ENCODE measurements at regions of chr1 and their contacts with region 1.

Region 1: GRCh38 chr1:66331657-66332547 is 202.1 kb upstream of the SGIP1 start:
- DNase-seq: peak; percentile 41 to 71 (median 45)
- H3K4me3 ChIP-seq: peak overlapping the region; percentile 79 to 96
- H3K4me3 Mint-ChIP-seq: peak overlapping the region; percentile 99 to 100 (median 100)
- H3K27ac ChIP-seq: peak overlapping the region; percentile 85
- H3K27ac Mint-ChIP-seq: peak overlapping the region; percentile 97 to 100 (median 98)
- H3K4me1 ChIP-seq: peaks cover 53% of the 10 kb centered on the region
- H3K4me1 Mint-ChIP-seq: peaks cover 26 to 78% (median 46%) of the 10 kb centered on the region in 4 donors
- H3K27me3 ChIP-seq: no peaks in the 10 kb centered on the region
- H3K27me3 Mint-ChIP-seq: no peaks in the 10 kb centered on the region

Region 2: GRCh38 chr1:65067491-65068201 is 1264.3 kb before region 1 on chr1:
- CTCF ChIA-PET with region 1: no interaction called
- POLR2A ChIA-PET with region 1: no interaction called
- intact Hi-C with region 1: loop called (anchors 10 kb)
- DNase-seq: peak; percentile 66 to 72 (median 69)
- H3K4me3 ChIP-seq: peak overlapping the region; percentile 84 to 97
- H3K4me3 Mint-ChIP-seq: peak overlapping the region; percentile 92 to 98 (median 96)
- H3K27ac ChIP-seq: peak overlapping the region; percentile 87
- H3K27ac Mint-ChIP-seq: peak overlapping the region; percentile 95 to 99 (median 98)
- H3K4me1 ChIP-seq: peaks cover 50% of the 10 kb centered on the region
- H3K4me1 Mint-ChIP-seq: peaks cover 39 to 66% (median 49%) of the 10 kb centered on the region in 4 donors
- H3K27me3 ChIP-seq: no peaks in the 10 kb centered on the region
- H3K27me3 Mint-ChIP-seq: no peaks in the 10 kb centered on the region

Region 3: DNA sequence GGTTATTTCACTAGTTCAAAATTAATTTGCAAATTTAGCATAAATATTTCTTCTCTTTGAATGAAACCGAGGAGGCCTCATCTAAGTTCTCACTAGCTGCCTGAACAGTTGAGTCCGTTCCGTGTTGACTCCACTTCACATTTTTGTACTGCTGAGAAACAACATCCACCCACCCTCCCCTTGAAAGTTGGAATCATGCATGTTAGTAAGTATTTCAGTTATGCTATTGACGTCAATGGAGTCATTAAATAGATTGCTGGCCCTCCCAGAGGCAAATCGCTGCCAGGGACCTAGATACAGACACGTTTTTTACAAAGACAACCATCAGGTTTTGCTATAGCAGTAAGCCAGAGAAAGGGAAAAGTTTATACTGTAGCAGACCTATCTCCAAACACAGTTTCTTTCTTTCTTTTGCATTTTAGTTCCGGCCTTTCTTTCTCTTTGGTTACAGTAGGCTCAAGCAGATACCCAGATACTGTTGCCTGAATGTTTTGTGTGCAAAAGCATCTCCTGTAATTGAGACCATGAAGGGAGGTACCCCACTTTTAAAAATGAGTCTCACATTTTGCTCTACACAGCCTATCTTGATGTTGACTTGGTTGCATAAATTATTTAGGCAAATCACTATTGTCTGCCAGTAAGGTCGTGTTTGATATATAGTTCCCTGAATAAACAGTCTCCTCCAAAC is 60.5 kb before region 1 on chr1:
- CTCF ChIA-PET with region 1: interaction called, 11 read pairs
- POLR2A ChIA-PET with region 1: interaction called, 121 read pairs
- intact Hi-C with region 1: loop called (anchors 1 kb)
- DNase-seq: peak; percentile 43 to 69 (median 54)
- H3K4me3 ChIP-seq: no peak overlapping the region
- H3K4me3 Mint-ChIP-seq: peak overlapping the region; percentile 2 to 74 (median 48)
- H3K27ac ChIP-seq: peak overlapping the region; percentile 18
- H3K27ac Mint-ChIP-seq: peak overlapping the region; percentile 33 to 93 (median 89)
- H3K4me1 ChIP-seq: peaks cover 55% of the 10 kb centered on the region
- H3K4me1 Mint-ChIP-seq: peaks cover 43 to 54% (median 51%) of the 10 kb centered on the region in 4 donors
- H3K27me3 ChIP-seq: no peaks in the 10 kb centered on the region
- H3K27me3 Mint-ChIP-seq: no peaks in the 10 kb centered on the region

Region 4: DNA sequence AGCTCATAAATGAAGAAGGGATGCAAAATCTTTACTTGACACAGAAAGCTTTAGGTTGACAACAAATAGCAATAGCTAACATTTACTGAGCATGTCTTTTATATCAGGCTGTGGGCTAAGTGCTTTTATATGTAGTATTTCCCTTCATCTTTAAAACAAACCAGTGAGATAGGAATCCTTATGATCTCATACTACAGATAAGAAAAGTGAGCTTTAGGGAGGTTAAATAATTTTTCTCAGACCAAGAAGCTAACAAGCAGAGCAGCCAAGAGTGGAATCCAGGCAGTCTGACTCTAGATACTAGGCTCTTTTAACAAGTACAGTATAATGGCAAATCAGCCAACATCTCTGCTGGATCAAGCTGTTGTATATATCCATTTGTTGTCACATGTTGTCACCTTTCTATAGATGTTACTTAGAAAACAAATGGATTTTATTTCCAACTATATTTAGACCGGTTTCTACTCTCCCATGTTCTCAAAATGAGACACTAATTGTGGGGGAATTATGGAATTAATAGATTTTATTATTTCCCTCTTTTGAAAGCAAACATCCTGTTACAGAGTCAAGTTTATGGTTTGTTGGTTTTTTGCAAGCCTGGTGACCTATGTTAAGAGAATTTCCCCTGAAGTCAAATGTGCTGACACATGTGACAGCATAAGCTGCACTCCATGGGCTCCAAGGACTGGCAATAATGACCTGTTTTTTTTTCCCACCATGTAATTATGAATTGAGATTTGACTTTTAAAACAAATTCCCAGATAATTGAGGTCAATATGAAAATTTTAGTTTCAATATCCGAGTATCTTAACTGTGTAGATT is 40.6 kb before region 1 on chr1:
- CTCF ChIA-PET with region 1: interaction called, 5 read pairs
- POLR2A ChIA-PET with region 1: interaction called, 18 read pairs
- intact Hi-C with region 1: no loop called
- DNase-seq: no peak
- H3K4me3 ChIP-seq: no peak overlapping the region
- H3K4me3 Mint-ChIP-seq: no peak overlapping the region
- H3K27ac ChIP-seq: no peak overlapping the region
- H3K27ac Mint-ChIP-seq: peak overlapping the region in 2 of 7 donors; percentile 24 to 45
- H3K4me1 ChIP-seq: peaks cover 13% of the 10 kb centered on the region
- H3K4me1 Mint-ChIP-seq: peaks cover 25 to 40% (median 30%) of the 10 kb centered on the region in 4 donors
- H3K27me3 ChIP-seq: no peaks in the 10 kb centered on the region
- H3K27me3 Mint-ChIP-seq: no peaks in the 10 kb centered on the region

Region 5: DNA sequence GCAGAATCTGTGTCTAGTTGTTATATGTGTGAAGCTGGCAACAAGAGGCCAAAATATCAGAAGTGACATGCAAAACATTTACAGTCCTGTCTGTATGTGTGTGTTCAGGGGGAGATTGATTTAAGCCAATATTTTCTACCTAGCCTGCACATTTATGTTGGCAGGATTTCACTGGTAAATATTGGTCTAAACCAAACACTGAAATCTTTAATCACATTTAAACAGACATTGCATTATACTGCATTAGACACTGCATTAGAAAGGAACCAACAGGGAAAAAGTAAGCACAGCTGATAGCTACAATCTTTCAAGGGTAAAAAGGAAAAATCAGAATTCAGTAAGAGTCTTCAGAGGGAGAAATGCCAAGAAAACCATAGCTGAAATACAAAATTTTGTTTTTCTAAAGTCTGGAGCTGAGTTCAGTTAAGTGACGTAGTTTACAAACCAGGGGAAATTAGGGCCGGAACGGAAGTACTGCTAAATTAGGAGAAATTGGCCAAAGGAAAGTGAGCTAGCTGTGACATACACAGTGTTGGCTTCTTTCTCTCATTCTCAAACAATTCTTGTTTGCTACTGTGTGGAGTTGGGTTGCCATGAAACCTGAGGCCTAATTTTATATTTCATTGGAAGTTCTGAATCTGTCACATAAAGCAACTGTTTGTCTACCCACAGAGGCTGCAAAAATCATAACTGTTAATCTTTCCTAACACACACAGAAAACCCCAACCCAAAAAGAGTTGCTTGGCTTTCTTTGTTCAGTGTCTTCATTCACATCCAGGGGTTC is 15.2 kb before region 1 on chr1:
- CTCF ChIA-PET with region 1: no interaction called
- POLR2A ChIA-PET with region 1: interaction called, 4 read pairs
- intact Hi-C with region 1: loop called (anchors 2 kb)
- DNase-seq: no peak
- H3K4me3 ChIP-seq: no peak overlapping the region
- H3K4me3 Mint-ChIP-seq: no peak overlapping the region
- H3K27ac ChIP-seq: no peak overlapping the region
- H3K27ac Mint-ChIP-seq: peak overlapping the region in 5 of 7 donors; percentile 1 to 83 (median 39)
- H3K4me1 ChIP-seq: no peaks in the 10 kb centered on the region
- H3K4me1 Mint-ChIP-seq: peaks cover 0 to 5% (median 2%) of the 10 kb centered on the region in 4 donors
- H3K27me3 ChIP-seq: no peaks in the 10 kb centered on the region
- H3K27me3 Mint-ChIP-seq: no peaks in the 10 kb centered on the region

Region 6: DNA sequence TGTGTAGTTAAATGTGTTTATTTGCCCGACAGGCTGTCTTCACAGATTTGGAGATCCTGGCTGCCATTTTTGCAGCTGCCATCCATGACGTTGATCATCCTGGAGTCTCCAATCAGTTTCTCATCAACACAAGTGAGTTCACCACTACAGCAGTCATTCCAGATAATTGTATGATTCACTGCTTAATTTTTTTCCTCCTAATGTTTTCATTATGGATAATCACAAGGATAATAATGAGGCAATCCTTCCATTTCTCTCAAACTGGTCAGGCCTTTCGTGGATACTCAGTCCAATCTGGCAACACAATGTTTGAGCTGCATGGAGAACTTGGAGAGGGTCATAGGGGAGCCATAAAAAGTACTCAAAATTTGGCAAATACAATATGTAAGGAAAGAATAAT is 33.7 kb after region 1 on chr1:
- CTCF ChIA-PET with region 1: interaction called, 15 read pairs
- POLR2A ChIA-PET with region 1: interaction called, 471 read pairs
- intact Hi-C with region 1: no loop called
- DNase-seq: no peak
- H3K4me3 ChIP-seq: no peak overlapping the region
- H3K4me3 Mint-ChIP-seq: no peak overlapping the region
- H3K27ac ChIP-seq: no peak overlapping the region
- H3K27ac Mint-ChIP-seq: peak overlapping the region; percentile 30 to 76 (median 64)
- H3K4me1 ChIP-seq: peaks cover 76% of the 10 kb centered on the region
- H3K4me1 Mint-ChIP-seq: peaks cover 46 to 86% (median 63%) of the 10 kb centered on the region in 4 donors
- H3K27me3 ChIP-seq: no peaks in the 10 kb centered on the region
- H3K27me3 Mint-ChIP-seq: no peaks in the 10 kb centered on the region

Region 7: GRCh38 chr1:66436378-66437145 is 104.7 kb after region 1 on chr1:
- CTCF ChIA-PET with region 1: interaction called, 6 read pairs
- POLR2A ChIA-PET with region 1: interaction called, 12 read pairs
- intact Hi-C with region 1: no loop called
- DNase-seq: peak; percentile 42 to 56 (median 48)
- H3K4me3 ChIP-seq: no peak overlapping the region
- H3K4me3 Mint-ChIP-seq: peak overlapping the region in 4 of 8 donors; percentile 4 to 61 (median 31)
- H3K27ac ChIP-seq: no peak overlapping the region
- H3K27ac Mint-ChIP-seq: peak overlapping the region in 6 of 7 donors; percentile 0 to 92 (median 52)
- H3K4me1 ChIP-seq: peaks cover 21% of the 10 kb centered on the region
- H3K4me1 Mint-ChIP-seq: peaks cover 8 to 27% (median 19%) of the 10 kb centered on the region in 4 donors
- H3K27me3 ChIP-seq: no peaks in the 10 kb centered on the region
- H3K27me3 Mint-ChIP-seq: no peaks in the 10 kb centered on the region

Region 8: DNA sequence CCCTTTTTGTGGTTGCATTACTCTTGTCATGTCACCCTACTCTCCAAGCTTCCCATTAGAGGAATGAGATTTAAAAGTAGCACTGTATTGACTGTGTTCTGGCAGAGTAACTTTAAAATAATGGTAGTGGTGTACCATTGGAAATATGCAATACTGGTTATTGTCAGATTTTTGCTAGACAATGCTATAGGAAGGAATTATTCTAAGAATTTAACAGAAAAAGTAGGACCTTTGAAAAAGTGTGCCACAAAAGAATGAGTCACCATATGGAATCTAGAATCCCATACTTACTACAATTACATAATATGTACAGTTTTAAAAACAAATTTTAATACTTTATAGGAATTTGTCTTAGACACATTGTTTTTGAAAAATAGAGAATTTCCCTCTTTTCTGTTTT is 606.7 kb after region 1 on chr1:
- CTCF ChIA-PET with region 1: no interaction called
- POLR2A ChIA-PET with region 1: no interaction called
- intact Hi-C with region 1: no loop called
- DNase-seq: no peak
- H3K4me3 ChIP-seq: no peak overlapping the region
- H3K4me3 Mint-ChIP-seq: peak overlapping the region in 4 of 8 donors; percentile 33 to 66 (median 52)
- H3K27ac ChIP-seq: no peak overlapping the region
- H3K27ac Mint-ChIP-seq: peak overlapping the region in 2 of 7 donors; percentile 17 to 47
- H3K4me1 ChIP-seq: peaks cover 94% of the 10 kb centered on the region
- H3K4me1 Mint-ChIP-seq: peaks cover 60 to 94% (median 76%) of the 10 kb centered on the region in 4 donors
- H3K27me3 ChIP-seq: no peaks in the 10 kb centered on the region
- H3K27me3 Mint-ChIP-seq: no peaks in the 10 kb centered on the region

Measured in CD4-positive, alpha-beta memory T cell (primary cell).